Esophagus muscularis mucosa (tissue), 4 donors: ENCODE measurements at regions of chr20 and their contacts with region 1.

Region 1: GRCh38 chr20:62376112-62377063 is 9.3 kb upstream of the LAMA5 start:
- DNase-seq: no peak
- H3K4me3 ChIP-seq: peak overlapping the region in 2 of 4 donors; percentile 10 to 19
- H3K27ac ChIP-seq: peak overlapping the region; percentile 74 to 97 (median 81)
- H3K4me1 ChIP-seq: peaks cover 52 to 82% (median 79%) of the 10 kb centered on the region in 4 donors
- H3K27me3 ChIP-seq: no peaks in the 10 kb centered on the region
- CTCF ChIP-seq: peak; percentile 59 to 75 (median 70)
- EP300 ChIP-seq: no peak
- POLR2A ChIP-seq: no peak

Region 2: GRCh38 chr20:62339647-62340070 is 36.7 kb before region 1 on chr20:
- intact Hi-C with region 1: loop called (anchors 5 kb)
- DNase-seq: no peak
- H3K4me3 ChIP-seq: no peak overlapping the region
- H3K27ac ChIP-seq: no peak overlapping the region
- H3K4me1 ChIP-seq: no peaks in the 10 kb centered on the region
- H3K27me3 ChIP-seq: no peaks in the 10 kb centered on the region
- CTCF ChIP-seq: no peak
- EP300 ChIP-seq: no peak
- POLR2A ChIP-seq: no peak

Region 3: GRCh38 chr20:62485062-62485700 is 108.8 kb after region 1 on chr20:
- intact Hi-C with region 1: no loop called
- DNase-seq: no peak
- H3K4me3 ChIP-seq: no peak overlapping the region
- H3K27ac ChIP-seq: no peak overlapping the region
- H3K4me1 ChIP-seq: peaks cover 7 to 25% (median 24%) of the 10 kb centered on the region in 4 donors
- H3K27me3 ChIP-seq: peaks cover 0 to 98% (median 19%) of the 10 kb centered on the region in 4 donors
- CTCF ChIP-seq: no peak
- EP300 ChIP-seq: no peak
- POLR2A ChIP-seq: no peak